Prostate gland (tissue), 2 donors: ENCODE measurements at regions of chr2 and their contacts with region 1.

Region 1: DNA sequence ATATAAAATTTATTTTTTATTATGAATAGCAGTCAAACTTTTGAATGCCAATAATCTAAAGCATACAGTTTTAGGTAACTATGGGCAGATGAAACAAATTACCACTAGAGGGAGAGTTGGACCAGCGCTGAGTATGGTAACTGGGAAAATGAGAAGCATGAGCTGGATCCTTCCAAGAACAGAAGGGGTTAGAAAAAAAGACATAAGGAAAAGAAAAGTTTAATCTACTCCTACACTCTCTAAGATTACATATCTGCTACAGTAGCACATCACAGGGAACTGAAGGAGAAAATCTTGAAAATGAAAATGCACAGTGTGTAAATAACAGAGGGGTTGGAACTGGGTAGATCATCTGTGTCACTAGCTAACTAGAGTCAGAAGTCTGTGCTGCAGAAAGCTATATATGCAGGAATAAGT is 15.5 kb downstream of the REG3G start:
- DNase-seq: no peak
- H3K4me3 ChIP-seq: no peak overlapping the region
- H3K27ac ChIP-seq: no peak overlapping the region
- H3K4me1 ChIP-seq: no peaks in the 10 kb centered on the region
- H3K27me3 ChIP-seq: no peaks in the 10 kb centered on the region
- CTCF ChIP-seq: peak in 2 of 4 experiments; percentile 16 to 17
- POLR2A ChIP-seq: no peak

Region 2: GRCh38 chr2:79100285-79100684 is 59.2 kb after region 1 on chr2:
- intact Hi-C with region 1: no loop called
- DNase-seq: no peak
- H3K4me3 ChIP-seq: no peak overlapping the region
- H3K27ac ChIP-seq: no peak overlapping the region
- H3K4me1 ChIP-seq: no peaks in the 10 kb centered on the region
- H3K27me3 ChIP-seq: no peaks in the 10 kb centered on the region
- CTCF ChIP-seq: no peak
- POLR2A ChIP-seq: no peak

Region 3: GRCh38 chr2:79223539-79223938 is 182.5 kb after region 1 on chr2:
- intact Hi-C with region 1: loop called (anchors 10 kb)
- DNase-seq: no peak
- H3K4me3 ChIP-seq: no peak overlapping the region
- H3K27ac ChIP-seq: no peak overlapping the region
- H3K4me1 ChIP-seq: no peaks in the 10 kb centered on the region
- H3K27me3 ChIP-seq: no peaks in the 10 kb centered on the region
- CTCF ChIP-seq: no peak
- POLR2A ChIP-seq: no peak